ENCODE measurements at regions of chr1 and their contacts with region 1.

Region 1: DNA sequence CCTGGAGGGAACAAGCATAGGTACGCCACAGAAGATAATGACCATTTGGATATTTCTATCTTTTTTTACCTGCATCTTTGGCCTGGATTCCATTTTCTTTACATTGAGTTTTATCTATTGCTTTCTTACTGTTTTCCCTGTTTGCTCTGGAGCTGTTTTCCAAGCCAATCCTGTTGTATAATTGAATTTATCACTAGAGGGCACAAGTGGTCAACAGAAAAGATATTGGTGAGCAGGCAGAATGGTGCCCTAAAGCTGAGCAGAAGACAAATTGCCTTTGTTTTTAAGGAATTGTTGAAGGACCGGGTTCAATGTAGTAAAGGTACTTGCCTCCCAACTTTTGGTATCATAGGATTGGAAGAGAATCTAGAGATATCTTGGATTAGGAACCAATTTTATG is 152.8 kb downstream of the PPP1R12B start:
- DNase-seq: peak; percentile 38
- ATAC-seq: peak; percentile 84
- H3K4me3 ChIP-seq: no peak overlapping the region
- H3K27ac ChIP-seq: no peak overlapping the region
- H3K4me1 ChIP-seq: no peaks in the 10 kb centered on the region
- H3K27me3 ChIP-seq: no peaks in the 10 kb centered on the region
- CTCF ChIP-seq: peak; percentile 54; the same call in 1 of the 2 replicates

Region 2: GRCh38 chr1:202184750-202185460 is 316.4 kb before region 1 on chr1:
- CTCF ChIA-PET with region 1: no interaction called
- POLR2A ChIA-PET with region 1: no interaction called
- in situ Hi-C with region 1: no loop called
- intact Hi-C with region 1: no loop called
- DNase-seq: peak; percentile 58
- ATAC-seq: peak; percentile 84
- H3K4me3 ChIP-seq: peak overlapping the region in 1 of 2 experiments; percentile 23; a peak in 2 of 4 replicates
- H3K27ac ChIP-seq: no peak overlapping the region
- H3K4me1 ChIP-seq: peaks cover 7% of the 10 kb centered on the region
- H3K27me3 ChIP-seq: no peaks in the 10 kb centered on the region
- CTCF ChIP-seq: peak; percentile 93

Region 3: DNA sequence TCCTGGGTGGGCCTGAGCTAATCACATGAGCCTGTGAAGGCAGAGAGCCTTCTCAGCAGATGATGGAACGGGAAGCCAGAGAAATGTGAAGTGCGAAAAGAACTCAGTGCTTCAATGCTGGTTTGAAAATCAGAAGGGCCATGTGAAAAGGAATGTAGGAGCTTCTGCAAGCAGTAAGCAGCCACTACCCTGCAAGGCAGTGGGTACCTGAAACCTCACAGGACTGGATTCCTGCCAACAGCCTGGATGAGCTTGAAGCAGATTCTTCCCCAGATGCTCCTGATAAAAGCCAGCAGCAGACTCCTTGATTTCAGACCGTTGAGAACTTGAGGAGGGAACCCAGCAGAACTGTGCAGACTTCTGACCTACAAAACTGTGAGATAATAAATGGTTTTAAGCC is 50.4 kb after region 1 on chr1:
- CTCF ChIA-PET with region 1: no interaction called
- POLR2A ChIA-PET with region 1: no interaction called
- in situ Hi-C with region 1: no loop called
- intact Hi-C with region 1: no loop called
- DNase-seq: no peak
- ATAC-seq: no peak
- H3K4me3 ChIP-seq: no peak overlapping the region
- H3K27ac ChIP-seq: no peak overlapping the region
- H3K4me1 ChIP-seq: no peaks in the 10 kb centered on the region; the same call in none of the 2 replicates
- H3K27me3 ChIP-seq: no peaks in the 10 kb centered on the region
- CTCF ChIP-seq: no peak

Region 4: DNA sequence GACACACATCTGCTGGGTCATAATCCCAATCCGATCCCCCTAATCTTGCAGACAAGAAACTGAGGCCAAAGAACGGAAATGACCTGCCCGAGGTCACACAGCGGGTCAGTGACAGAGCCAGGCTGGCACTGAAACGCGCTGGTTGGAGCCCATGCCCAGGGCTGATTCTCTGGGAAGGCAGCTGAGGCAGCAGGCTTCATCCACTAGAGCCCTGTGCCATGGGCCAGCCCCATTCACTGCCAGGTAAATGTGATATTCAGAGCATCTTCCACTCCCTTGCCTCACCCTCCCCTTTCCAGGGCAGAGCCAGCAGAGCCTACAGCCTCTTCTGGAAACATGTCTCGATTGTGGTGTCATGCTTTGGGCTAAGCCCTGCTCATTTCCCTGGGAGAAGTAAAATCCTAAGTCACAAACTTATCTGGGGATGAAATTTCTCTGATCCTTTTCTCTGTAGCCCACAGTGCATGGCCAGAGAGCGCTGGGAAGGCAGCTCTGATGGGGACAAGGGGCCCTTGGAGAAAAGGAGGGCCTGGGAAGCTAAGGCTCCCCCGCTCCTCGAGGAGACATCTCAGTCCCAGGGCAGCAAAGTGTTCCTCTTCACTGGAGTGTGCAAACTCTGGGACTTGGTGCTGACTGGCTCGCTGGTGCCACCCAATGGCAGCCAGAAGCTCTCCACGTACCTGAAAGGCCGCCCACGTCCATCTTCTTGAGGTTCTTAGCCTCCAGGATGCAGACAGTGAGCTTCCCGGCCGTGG is 98.6 kb after region 1 on chr1:
- CTCF ChIA-PET with region 1: interaction called, 7 read pairs
- POLR2A ChIA-PET with region 1: no interaction called
- in situ Hi-C with region 1: no loop called
- intact Hi-C with region 1: loop called (anchors 1 kb)
- DNase-seq: no peak
- ATAC-seq: peak; percentile 95
- H3K4me3 ChIP-seq: no peak overlapping the region
- H3K27ac ChIP-seq: no peak overlapping the region
- H3K4me1 ChIP-seq: no peaks in the 10 kb centered on the region
- H3K27me3 ChIP-seq: no peaks in the 10 kb centered on the region
- CTCF ChIP-seq: peak; percentile 92

Region 5: GRCh38 chr1:202688375-202688774 is 187.1 kb after region 1 on chr1:
- CTCF ChIA-PET with region 1: no interaction called
- POLR2A ChIA-PET with region 1: no interaction called
- in situ Hi-C with region 1: no loop called
- intact Hi-C with region 1: no loop called
- DNase-seq: no peak
- ATAC-seq: no peak
- H3K4me3 ChIP-seq: no peak overlapping the region
- H3K27ac ChIP-seq: no peak overlapping the region
- H3K4me1 ChIP-seq: no peaks in the 10 kb centered on the region
- H3K27me3 ChIP-seq: peaks cover 22% of the 10 kb centered on the region
- CTCF ChIP-seq: no peak